ENCODE measurements at regions of chr15 and their contacts with region 1.

Region 1: GRCh38 chr15:76941636-76942035 is 10.1 kb downstream of the RCN2 start:
- DNase-seq: no peak
- ATAC-seq: no peak
- H3K4me3 ChIP-seq: no peak overlapping the region
- H3K27ac ChIP-seq: no peak overlapping the region
- H3K4me1 ChIP-seq: peaks cover 2% of the 10 kb centered on the region; the same call in 1 of the 2 replicates
- H3K27me3 ChIP-seq: no peaks in the 10 kb centered on the region
- CTCF ChIP-seq: no peak
- EP300 ChIP-seq: no peak
- POLR2A ChIP-seq: no peak
- RAD21 ChIP-seq: no peak

Region 2: GRCh38 chr15:76954744-76955143 is 13.1 kb after region 1 on chr15:
- CTCF ChIA-PET with region 1: interaction called, 8 read pairs
- POLR2A ChIA-PET with region 1: no interaction called
- RAD21 ChIA-PET with region 1: no interaction called
- SMC1A ChIA-PET with region 1: interaction called, 10 read pairs
- in situ Hi-C with region 1: no loop called
- intact Hi-C with region 1: no loop called
- DNase-seq: no peak
- ATAC-seq: no peak
- H3K4me3 ChIP-seq: no peak overlapping the region
- H3K27ac ChIP-seq: no peak overlapping the region
- H3K4me1 ChIP-seq: no peaks in the 10 kb centered on the region
- H3K27me3 ChIP-seq: no peaks in the 10 kb centered on the region
- CTCF ChIP-seq: no peak
- EP300 ChIP-seq: no peak
- POLR2A ChIP-seq: no peak
- RAD21 ChIP-seq: no peak

Region 3: DNA sequence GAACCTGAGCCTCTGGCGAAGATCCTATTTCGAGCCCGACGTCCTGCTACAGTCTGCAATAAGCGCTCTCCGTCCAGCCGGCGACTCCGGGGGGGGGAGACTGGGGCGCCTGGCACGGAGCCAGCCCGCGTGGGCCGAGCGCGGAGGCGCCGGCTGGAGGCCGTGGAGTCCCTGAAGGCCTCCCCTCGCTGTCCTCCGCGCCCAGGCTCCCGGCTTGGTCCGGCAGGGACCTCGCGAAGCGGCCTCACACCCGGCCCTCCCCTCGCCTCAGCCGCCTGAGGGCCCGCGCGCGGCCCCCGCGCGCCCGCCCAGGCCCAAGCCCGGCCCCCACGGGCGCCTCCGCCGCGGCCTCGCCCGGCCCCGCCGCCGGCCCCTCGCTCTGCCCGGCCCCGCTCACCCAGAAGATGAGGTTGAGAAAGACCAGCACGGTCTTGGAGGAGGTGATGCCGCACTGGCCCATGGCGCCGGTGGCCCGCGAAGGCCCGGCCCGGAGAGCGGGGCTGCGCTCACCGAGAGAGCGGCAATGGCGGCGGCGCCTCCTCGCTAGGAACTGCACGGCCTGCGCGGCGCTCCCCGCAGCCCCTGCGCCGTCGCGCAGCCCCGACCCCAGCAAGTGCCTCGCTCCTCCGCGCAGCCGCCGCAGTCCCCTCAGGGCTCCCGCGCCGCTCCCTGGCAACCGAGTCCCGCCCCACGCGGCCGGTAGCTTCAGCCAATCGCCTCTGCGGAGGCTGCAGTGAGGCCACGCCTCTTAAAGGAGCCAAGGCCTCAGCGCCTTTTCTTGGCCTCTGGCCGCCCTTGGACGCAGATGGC is 129.1 kb after region 1 on chr15 and contains the start of gene TSPAN3:
- CTCF ChIA-PET with region 1: no interaction called
- POLR2A ChIA-PET with region 1: no interaction called
- RAD21 ChIA-PET with region 1: no interaction called
- SMC1A ChIA-PET with region 1: no interaction called
- in situ Hi-C with region 1: no loop called
- intact Hi-C with region 1: no loop called
- DNase-seq: peak; percentile 54
- ATAC-seq: peak; percentile 99
- H3K4me3 ChIP-seq: peak within 1 kb of the TSS; percentile 83
- H3K27ac ChIP-seq: peak within 1 kb of the TSS; percentile 72
- H3K4me1 ChIP-seq: peaks cover 25% of the 10 kb centered on the region
- H3K27me3 ChIP-seq: no peaks in the 10 kb centered on the region; a peak in 1 of 4 replicates
- CTCF ChIP-seq: no peak
- EP300 ChIP-seq: no peak
- POLR2A ChIP-seq: peak; percentile 89
- RAD21 ChIP-seq: no peak
- polyA plus RNA-seq, gene TSPAN3: 18.9 to 31.7 TPM